ENCODE measurements at regions of chr17 and their contacts with region 1.

Region 1: GRCh38 chr17:69466905-69467667 is 52.6 kb downstream of the MAP2K6 start:
- DNase-seq: peak; percentile 92
- H3K4me3 ChIP-seq: no peak overlapping the region
- H3K27ac ChIP-seq: peak overlapping the region; percentile 65
- H3K4me1 ChIP-seq: peaks cover 20% of the 10 kb centered on the region
- H3K27me3 ChIP-seq: no peaks in the 10 kb centered on the region
- CTCF ChIP-seq: no peak
- POLR2A ChIP-seq: no peak

Region 2: GRCh38 chr17:69388822-69389442 is 78.2 kb before region 1 on chr17:
- CTCF ChIA-PET with region 1: interaction called, 10 read pairs
- POLR2A ChIA-PET with region 1: no interaction called
- dilution Hi-C with region 1: no loop called
- intact Hi-C with region 1: no loop called
- DNase-seq: no peak
- H3K4me3 ChIP-seq: no peak overlapping the region
- H3K27ac ChIP-seq: no peak overlapping the region
- H3K4me1 ChIP-seq: no peaks in the 10 kb centered on the region
- H3K27me3 ChIP-seq: no peaks in the 10 kb centered on the region
- CTCF ChIP-seq: no peak
- POLR2A ChIP-seq: no peak

Region 3: GRCh38 chr17:69414408-69415274 is 52.4 kb before region 1 on chr17 and contains the start of gene MAP2K6:
- CTCF ChIA-PET with region 1: interaction called, 3 read pairs
- POLR2A ChIA-PET with region 1: no interaction called
- dilution Hi-C with region 1: no loop called
- intact Hi-C with region 1: loop called (anchors 1 kb)
- DNase-seq: peak; percentile 86
- H3K4me3 ChIP-seq: peak within 1 kb of the TSS; percentile 42 to 70 (median 48)
- H3K27ac ChIP-seq: peak within 1 kb of the TSS; percentile 35
- H3K4me1 ChIP-seq: peaks cover 48% of the 10 kb centered on the region
- H3K27me3 ChIP-seq: no peaks in the 10 kb centered on the region
- CTCF ChIP-seq: no peak
- POLR2A ChIP-seq: peak; percentile 50
- total RNA-seq, gene MAP2K6: 11.4 and 13.9 TPM in 2 replicates

Measured in endothelial cell of umbilical vein (primary cell).